ENCODE measurements at regions of chr12 and their contacts with region 1.

Region 1: DNA sequence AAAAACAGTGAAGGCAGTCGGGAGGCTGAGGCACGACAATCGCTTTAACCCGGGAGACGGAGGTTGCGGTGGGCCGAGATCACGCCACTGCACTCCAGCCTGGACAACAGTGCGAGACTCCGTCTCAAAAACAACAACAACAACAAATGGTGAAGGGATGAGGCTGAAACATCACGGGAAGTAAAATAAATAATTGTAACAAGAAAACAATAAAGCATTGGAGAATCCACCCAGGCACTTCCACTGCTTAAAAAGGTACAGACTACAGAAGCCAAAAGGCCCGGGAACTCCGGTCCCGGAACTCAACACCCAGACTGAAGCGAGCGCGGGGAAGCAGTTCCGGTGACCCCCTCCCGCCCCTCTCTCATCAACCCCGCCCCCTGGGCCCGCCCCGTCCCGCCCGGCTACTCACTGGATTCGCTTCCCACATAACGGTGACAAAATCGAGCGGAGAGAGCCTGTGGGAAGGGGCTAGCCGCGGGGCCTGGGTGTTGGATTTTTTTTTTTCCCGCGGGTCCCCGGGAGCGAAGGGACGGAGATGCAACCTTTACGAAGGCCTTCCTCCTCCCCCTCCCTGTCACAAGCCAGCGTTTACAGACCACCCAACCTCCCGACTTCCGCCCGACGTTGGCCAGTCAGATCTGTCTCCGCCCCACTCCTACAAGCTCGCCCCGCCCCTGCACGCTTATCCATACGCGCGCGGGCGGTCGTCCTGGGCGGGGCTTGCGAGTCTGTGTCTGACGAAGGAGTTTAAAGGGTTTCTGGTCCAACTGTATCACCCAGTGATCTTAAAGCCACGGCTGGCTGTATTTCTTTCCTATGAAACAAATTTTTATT is at the start of gene PARP11:
- DNase-seq: peak; percentile 99
- H3K4me3 Mint-ChIP-seq: peak within 1 kb of the TSS; percentile 87
- H3K27ac Mint-ChIP-seq: peak within 1 kb of the TSS; percentile 96
- H3K4me1 Mint-ChIP-seq: peaks cover 38% of the 10 kb centered on the region
- H3K27me3 Mint-ChIP-seq: no peaks in the 10 kb centered on the region
- total RNA-seq, gene PARP11: 19.9 to 20.7 TPM

Region 2: DNA sequence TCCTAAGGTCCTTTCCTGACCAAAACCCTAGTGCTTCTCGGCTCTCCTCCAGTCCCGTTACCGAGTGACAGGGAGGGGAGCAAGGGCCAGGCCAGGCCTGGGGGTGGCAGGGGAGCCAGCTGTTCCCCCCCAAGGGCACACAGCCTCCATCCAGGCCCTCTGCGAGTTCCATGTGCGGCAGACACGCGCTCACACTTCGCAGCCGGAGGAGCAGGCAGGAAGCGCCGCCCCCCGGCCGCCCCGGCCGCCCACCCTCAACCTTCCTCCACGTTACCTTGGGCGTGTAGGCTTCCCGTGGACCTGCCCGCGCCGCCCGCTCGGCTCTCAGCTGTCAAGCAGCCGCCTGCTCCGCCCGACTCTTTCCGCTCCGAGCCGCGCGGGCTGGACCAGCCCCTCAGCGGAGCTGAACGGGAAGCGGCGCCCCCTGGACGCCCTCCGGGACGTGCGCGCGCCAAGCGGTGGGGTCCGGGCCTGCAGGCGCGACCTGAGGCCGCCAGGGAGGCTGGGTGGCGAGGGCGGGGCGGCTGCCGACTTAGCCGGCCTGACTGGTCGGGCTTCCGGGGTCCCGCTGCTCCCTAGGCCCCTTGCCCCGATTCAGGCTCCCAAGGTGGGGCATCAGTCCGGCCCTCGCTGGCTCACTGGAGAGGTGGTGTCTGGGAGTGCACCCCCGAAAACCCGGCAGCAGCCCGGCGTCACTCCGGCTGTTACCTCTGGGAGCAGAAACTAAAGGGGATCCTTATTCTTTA is 120.1 kb before region 1 on chr12 and contains the start of gene CRACR2A:
- CTCF ChIA-PET with region 1: no interaction called
- intact Hi-C with region 1: loop called (anchors 2 kb)
- DNase-seq: peak; percentile 86
- H3K4me3 Mint-ChIP-seq: peak within 1 kb of the TSS; percentile 95
- H3K27ac Mint-ChIP-seq: peak within 1 kb of the TSS; percentile 98
- H3K4me1 Mint-ChIP-seq: peaks cover 53% of the 10 kb centered on the region
- H3K27me3 Mint-ChIP-seq: no peaks in the 10 kb centered on the region
- total RNA-seq, gene CRACR2A: 19.0 to 20.7 TPM

Region 3: GRCh38 chr12:3905664-3906063 is 32.6 kb after region 1 on chr12:
- CTCF ChIA-PET with region 1: no interaction called
- intact Hi-C with region 1: loop called (anchors 1 kb)
- DNase-seq: peak; percentile 27
- H3K4me3 Mint-ChIP-seq: peak overlapping the region; percentile 61
- H3K27ac Mint-ChIP-seq: peak overlapping the region; percentile 76
- H3K4me1 Mint-ChIP-seq: peaks cover 49% of the 10 kb centered on the region
- H3K27me3 Mint-ChIP-seq: no peaks in the 10 kb centered on the region

Region 4: DNA sequence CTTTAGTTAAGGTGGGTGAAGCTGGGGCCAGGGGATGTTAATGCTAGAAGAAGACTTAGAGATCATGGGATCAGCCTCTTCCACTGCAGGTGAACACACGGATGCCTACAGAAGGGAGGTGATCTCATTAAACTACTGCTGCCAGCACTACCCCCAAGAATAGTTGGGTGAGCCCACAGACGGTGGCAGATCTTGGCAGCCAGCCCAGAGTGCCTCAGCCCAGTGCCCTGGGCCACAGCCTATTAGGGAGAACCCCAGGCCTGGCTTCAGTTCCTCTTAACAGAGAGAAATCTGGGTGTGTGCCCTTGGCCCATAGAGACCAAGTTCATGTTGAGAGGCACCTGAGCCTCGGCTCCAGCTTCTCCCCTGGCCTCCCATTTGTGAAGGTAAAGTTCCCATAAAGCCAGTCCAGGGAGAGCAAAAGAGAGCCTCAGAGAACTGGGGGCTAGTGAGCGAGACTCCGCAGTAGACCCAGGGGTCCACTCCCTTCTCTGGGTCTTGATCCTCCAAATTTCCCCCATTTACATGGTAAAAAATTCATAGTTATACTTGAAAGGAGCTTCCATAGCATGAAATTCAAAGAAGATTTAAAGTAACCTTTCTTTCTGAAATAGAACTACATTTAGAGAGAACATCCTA is 275.5 kb after region 1 on chr12:
- CTCF ChIA-PET with region 1: no interaction called
- intact Hi-C with region 1: loop called (anchors 1 kb)
- DNase-seq: peak; percentile 82
- H3K4me3 Mint-ChIP-seq: no peak overlapping the region
- H3K27ac Mint-ChIP-seq: peak overlapping the region; percentile 92
- H3K4me1 Mint-ChIP-seq: peaks cover 89% of the 10 kb centered on the region
- H3K27me3 Mint-ChIP-seq: no peaks in the 10 kb centered on the region

Region 5: GRCh38 chr12:4506870-4507269 is 633.9 kb after region 1 on chr12:
- CTCF ChIA-PET with region 1: no interaction called
- intact Hi-C with region 1: loop called (anchors 2 kb)
- DNase-seq: peak; percentile 32
- H3K4me3 Mint-ChIP-seq: peak overlapping the region; percentile 1
- H3K27ac Mint-ChIP-seq: peak overlapping the region; percentile 63
- H3K4me1 Mint-ChIP-seq: peaks cover 26% of the 10 kb centered on the region
- H3K27me3 Mint-ChIP-seq: no peaks in the 10 kb centered on the region

Region 6: DNA sequence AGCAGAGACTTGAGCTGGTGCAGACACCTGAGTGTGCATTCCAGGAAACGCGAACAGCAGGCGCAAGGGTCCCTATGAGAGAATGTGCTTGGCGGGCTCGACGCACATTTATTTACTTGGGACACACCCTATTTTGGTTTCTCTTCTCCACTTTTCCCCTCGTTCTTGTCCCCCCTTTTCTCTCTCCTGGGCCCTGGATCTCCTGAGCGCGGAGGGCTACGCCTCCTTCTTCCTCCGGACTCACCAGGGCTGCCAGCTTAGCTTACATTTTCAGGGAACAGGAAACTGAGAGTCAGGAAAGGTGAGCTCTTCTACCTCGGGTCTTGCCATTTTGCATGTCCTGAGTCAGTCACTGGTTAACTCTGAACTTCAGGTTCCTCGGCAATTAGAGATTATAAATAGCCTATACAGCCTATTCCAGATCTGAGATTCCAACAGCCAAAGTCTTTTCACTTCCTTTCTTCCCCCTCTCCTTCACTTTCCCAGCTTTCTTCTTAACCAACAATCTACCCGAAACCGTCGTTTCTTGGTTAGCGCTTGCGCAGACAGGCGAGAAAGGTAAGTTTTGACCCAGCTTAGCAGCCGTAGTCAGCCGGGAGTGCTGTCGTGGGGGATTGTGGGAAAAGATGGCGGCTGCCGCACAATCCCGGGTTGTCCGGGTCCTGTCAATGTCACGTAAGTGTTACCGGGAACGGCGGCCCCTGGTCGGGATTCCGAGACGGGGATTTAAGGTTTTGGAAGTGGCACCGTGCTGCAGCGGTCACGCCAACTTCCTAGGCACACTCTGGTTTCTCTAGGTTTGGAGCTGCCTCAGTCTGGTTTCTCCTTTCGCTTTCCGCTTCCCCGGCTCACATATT is 775.7 kb after region 1 on chr12 and contains the starts of genes AKAP3 and NDUFA9:
- CTCF ChIA-PET with region 1: no interaction called
- intact Hi-C with region 1: loop called (anchors 1 kb)
- DNase-seq: peak; percentile 90
- H3K4me3 Mint-ChIP-seq: peak within 1 kb of the TSS; percentile 98
- H3K27ac Mint-ChIP-seq: peak within 1 kb of the TSS; percentile 83
- H3K4me1 Mint-ChIP-seq: peaks cover 47% of the 10 kb centered on the region
- H3K27me3 Mint-ChIP-seq: no peaks in the 10 kb centered on the region
- total RNA-seq, gene AKAP3: 1.8 to 2.1 TPM
- total RNA-seq, gene NDUFA9: 150 to 160 TPM